Natural killer cell (primary cell): ENCODE measurements at regions of chr15 and their contacts with region 1.

Region 1: GRCh38 chr15:40743921-40744814 is 10.9 kb downstream of the RMDN3 start:
- DNase-seq: peak; percentile 70 to 88
- ATAC-seq: peak; percentile 83 to 94 (median 90)
- H3K4me3 ChIP-seq: no peak overlapping the region
- H3K4me3 Mint-ChIP-seq: peak overlapping the region; percentile 80
- H3K27ac ChIP-seq: peak overlapping the region; percentile 75
- H3K27ac Mint-ChIP-seq: peak overlapping the region; percentile 94 to 96
- H3K4me1 ChIP-seq: peaks cover 55% of the 10 kb centered on the region
- H3K4me1 Mint-ChIP-seq: peaks cover 55 to 58% of the 10 kb centered on the region in 2 donors
- H3K27me3 ChIP-seq: no peaks in the 10 kb centered on the region
- H3K27me3 Mint-ChIP-seq: no peaks in the 10 kb centered on the region
- CTCF ChIP-seq: no peak

Region 2: DNA sequence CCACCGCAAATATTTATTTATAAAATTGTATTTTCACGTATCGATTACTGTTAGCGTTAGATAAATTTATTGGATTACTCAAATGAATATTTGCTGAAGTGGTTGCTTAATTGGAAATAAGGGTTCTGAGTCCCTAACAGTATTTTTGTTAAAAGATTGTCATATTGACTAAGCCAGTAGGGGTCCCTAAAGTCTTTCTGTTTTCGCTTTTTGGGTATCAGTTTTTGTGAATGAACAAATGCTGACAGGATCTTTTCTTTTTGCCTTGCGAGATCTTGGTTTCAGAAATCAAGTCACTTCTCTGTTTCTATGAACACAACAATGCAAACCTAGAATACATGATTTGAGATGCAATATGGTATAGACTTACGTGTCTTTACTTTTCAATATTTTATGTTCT is 42.1 kb before region 1 on chr15:
- intact Hi-C with region 1: loop called (anchors 5 kb)
- DNase-seq: peak in 1 of 2 donors; percentile 54
- ATAC-seq: peak in 2 of 3 donors; percentile 61 to 68
- H3K4me3 ChIP-seq: no peak overlapping the region
- H3K4me3 Mint-ChIP-seq: no peak overlapping the region
- H3K27ac ChIP-seq: no peak overlapping the region
- H3K27ac Mint-ChIP-seq: no peak overlapping the region
- H3K4me1 ChIP-seq: no peaks in the 10 kb centered on the region
- H3K4me1 Mint-ChIP-seq: no peaks in the 10 kb centered on the region
- H3K27me3 ChIP-seq: no peaks in the 10 kb centered on the region
- H3K27me3 Mint-ChIP-seq: no peaks in the 10 kb centered on the region
- CTCF ChIP-seq: peak; percentile 55

Region 3: GRCh38 chr15:40731034-40731433 is 13.1 kb before region 1 on chr15:
- intact Hi-C with region 1: no loop called
- DNase-seq: no peak
- ATAC-seq: no peak
- H3K4me3 ChIP-seq: no peak overlapping the region
- H3K4me3 Mint-ChIP-seq: no peak overlapping the region
- H3K27ac ChIP-seq: no peak overlapping the region
- H3K27ac Mint-ChIP-seq: no peak overlapping the region
- H3K4me1 ChIP-seq: no peaks in the 10 kb centered on the region
- H3K4me1 Mint-ChIP-seq: no peaks in the 10 kb centered on the region
- H3K27me3 ChIP-seq: no peaks in the 10 kb centered on the region
- H3K27me3 Mint-ChIP-seq: no peaks in the 10 kb centered on the region
- CTCF ChIP-seq: no peak

Region 4: GRCh38 chr15:40776522-40777137 is 32.5 kb after region 1 on chr15:
- intact Hi-C with region 1: loop called (anchors 2 kb)
- DNase-seq: peak; percentile 74 to 79
- ATAC-seq: peak; percentile 97 to 99 (median 98)
- H3K4me3 ChIP-seq: no peak overlapping the region
- H3K4me3 Mint-ChIP-seq: peak overlapping the region; percentile 82
- H3K27ac ChIP-seq: peak overlapping the region; percentile 62
- H3K27ac Mint-ChIP-seq: peak overlapping the region; percentile 86 to 97
- H3K4me1 ChIP-seq: peaks cover 42% of the 10 kb centered on the region
- H3K4me1 Mint-ChIP-seq: peaks cover 23 to 33% of the 10 kb centered on the region in 2 donors
- H3K27me3 ChIP-seq: no peaks in the 10 kb centered on the region
- H3K27me3 Mint-ChIP-seq: no peaks in the 10 kb centered on the region
- CTCF ChIP-seq: no peak

Region 5: DNA sequence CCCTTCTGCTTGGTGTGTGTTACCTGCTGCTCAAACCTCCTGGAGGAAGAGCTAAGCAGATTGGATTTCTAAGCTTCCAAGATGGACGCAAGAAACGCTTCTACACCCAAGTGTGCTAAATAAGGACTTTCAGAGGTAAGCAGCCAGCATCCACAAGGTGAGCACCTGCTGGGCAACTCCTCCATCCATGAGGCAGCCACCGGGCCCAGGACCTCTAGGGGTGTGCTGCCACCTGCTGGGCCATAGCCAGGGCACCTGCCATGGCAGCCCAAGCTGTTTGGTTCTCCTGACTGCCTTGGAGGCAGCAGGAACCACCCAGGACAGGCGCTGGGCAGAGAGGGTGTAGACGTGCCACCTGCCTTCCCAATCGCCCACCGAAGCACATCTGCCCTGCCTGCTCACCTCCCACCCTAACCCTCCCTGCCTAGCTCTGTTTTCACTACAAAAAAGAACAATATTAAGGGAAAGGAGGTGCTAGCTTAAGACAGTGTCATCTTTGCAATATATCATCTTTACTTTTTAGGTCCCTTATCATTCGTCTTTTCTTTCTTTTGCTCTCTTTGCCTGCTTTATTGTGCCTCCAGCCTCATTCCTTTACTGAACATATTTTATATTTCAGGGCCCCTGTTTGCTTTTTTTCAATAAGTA is 38.5 kb after region 1 on chr15:
- intact Hi-C with region 1: loop called (anchors 1 kb)
- DNase-seq: peak; percentile 74 to 88
- ATAC-seq: peak; percentile 93 to 98 (median 97)
- H3K4me3 ChIP-seq: no peak overlapping the region
- H3K4me3 Mint-ChIP-seq: no peak overlapping the region
- H3K27ac ChIP-seq: no peak overlapping the region
- H3K27ac Mint-ChIP-seq: peak overlapping the region in 1 of 2 donors; percentile 46
- H3K4me1 ChIP-seq: peaks cover 29% of the 10 kb centered on the region
- H3K4me1 Mint-ChIP-seq: peaks cover 33 to 36% of the 10 kb centered on the region in 2 donors
- H3K27me3 ChIP-seq: no peaks in the 10 kb centered on the region
- H3K27me3 Mint-ChIP-seq: no peaks in the 10 kb centered on the region
- CTCF ChIP-seq: peak; percentile 77

Region 6: GRCh38 chr15:40825661-40826088 is 81.5 kb after region 1 on chr15:
- intact Hi-C with region 1: no loop called
- DNase-seq: no peak
- ATAC-seq: no peak
- H3K4me3 ChIP-seq: no peak overlapping the region
- H3K4me3 Mint-ChIP-seq: no peak overlapping the region
- H3K27ac ChIP-seq: no peak overlapping the region
- H3K27ac Mint-ChIP-seq: no peak overlapping the region
- H3K4me1 ChIP-seq: no peaks in the 10 kb centered on the region
- H3K4me1 Mint-ChIP-seq: no peaks in the 10 kb centered on the region
- H3K27me3 ChIP-seq: no peaks in the 10 kb centered on the region
- H3K27me3 Mint-ChIP-seq: peaks cover 0 to 3% of the 10 kb centered on the region in 2 donors
- CTCF ChIP-seq: no peak

Region 7: DNA sequence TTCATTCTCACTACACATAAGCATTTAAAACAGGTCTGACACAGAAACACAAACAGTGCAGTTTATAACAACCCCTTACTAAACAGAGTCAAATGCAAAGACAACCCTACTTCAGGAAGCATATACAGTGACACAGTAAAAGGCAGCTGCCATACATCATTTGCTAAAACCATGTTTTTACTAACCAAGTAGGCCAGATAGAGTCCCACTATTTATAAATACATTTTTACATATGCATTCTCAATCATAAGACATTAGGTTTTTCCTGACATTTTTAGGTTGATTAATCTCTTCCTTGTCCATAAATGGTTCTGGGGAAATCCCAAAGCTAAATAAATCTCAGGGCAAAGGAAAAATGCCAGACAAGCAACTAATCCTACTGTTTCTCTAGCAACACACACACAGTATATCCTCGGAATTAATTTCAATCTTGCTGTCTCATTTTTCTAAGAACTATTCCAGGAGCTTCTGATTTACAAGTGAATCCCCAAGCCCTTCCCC is 248.1 kb after region 1 on chr15:
- intact Hi-C with region 1: no loop called
- DNase-seq: no peak
- ATAC-seq: no peak
- H3K4me3 ChIP-seq: no peak overlapping the region
- H3K4me3 Mint-ChIP-seq: no peak overlapping the region
- H3K27ac ChIP-seq: no peak overlapping the region
- H3K27ac Mint-ChIP-seq: no peak overlapping the region
- H3K4me1 ChIP-seq: no peaks in the 10 kb centered on the region
- H3K4me1 Mint-ChIP-seq: no peaks in the 10 kb centered on the region
- H3K27me3 ChIP-seq: no peaks in the 10 kb centered on the region
- H3K27me3 Mint-ChIP-seq: no peaks in the 10 kb centered on the region
- CTCF ChIP-seq: no peak